Ascending aorta (tissue), 2 donors: ENCODE measurements at regions of chr19 and their contacts with region 1.

Region 1: GRCh38 chr19:7515645-7516151 is at the start of gene ZNF358:
- DNase-seq: peak in 1 of 2 donors; percentile 88
- H3K4me3 ChIP-seq: peak within 1 kb of the TSS; percentile 70 to 97
- H3K27ac ChIP-seq: peak within 1 kb of the TSS; percentile 90 to 96
- H3K4me1 ChIP-seq: peaks cover 6 to 23% of the 10 kb centered on the region in 2 donors
- H3K27me3 ChIP-seq: no peaks in the 10 kb centered on the region
- CTCF ChIP-seq: no peak
- total RNA-seq, gene ZNF358: 163 TPM

Region 2: GRCh38 chr19:7230826-7231225 is 284.9 kb before region 1 on chr19:
- intact Hi-C with region 1: loop called (anchors 10 kb)
- DNase-seq: peak in 1 of 2 donors; percentile 81
- H3K4me3 ChIP-seq: peak overlapping the region in 1 of 2 donors; percentile 28
- H3K27ac ChIP-seq: peak overlapping the region in 1 of 2 donors; percentile 53
- H3K4me1 ChIP-seq: peaks cover 3 to 22% of the 10 kb centered on the region in 2 donors
- H3K27me3 ChIP-seq: no peaks in the 10 kb centered on the region
- CTCF ChIP-seq: no peak

Region 3: DNA sequence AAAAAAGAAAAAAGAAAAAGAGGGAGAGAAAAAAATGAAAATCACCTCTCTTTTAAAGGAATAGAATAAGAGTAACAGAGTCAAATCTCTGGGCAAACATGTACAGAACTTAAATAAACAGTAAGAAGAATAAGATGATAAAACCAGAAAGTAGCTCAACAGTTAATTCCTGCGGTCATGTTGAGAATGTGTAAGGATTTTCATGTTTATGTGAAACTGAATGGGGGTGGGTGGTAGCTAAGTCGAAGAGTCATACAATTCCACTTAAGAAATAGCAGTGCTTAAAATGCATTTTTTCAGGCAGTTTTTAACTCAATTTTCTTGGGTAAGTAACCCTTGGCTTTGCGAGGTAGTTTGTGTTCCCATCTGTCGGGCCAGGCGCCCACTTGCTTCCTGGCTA is 87.8 kb before region 1 on chr19:
- intact Hi-C with region 1: no loop called
- DNase-seq: no peak
- H3K4me3 ChIP-seq: no peak overlapping the region
- H3K27ac ChIP-seq: no peak overlapping the region
- H3K4me1 ChIP-seq: no peaks in the 10 kb centered on the region
- H3K27me3 ChIP-seq: no peaks in the 10 kb centered on the region
- CTCF ChIP-seq: no peak

Region 4: DNA sequence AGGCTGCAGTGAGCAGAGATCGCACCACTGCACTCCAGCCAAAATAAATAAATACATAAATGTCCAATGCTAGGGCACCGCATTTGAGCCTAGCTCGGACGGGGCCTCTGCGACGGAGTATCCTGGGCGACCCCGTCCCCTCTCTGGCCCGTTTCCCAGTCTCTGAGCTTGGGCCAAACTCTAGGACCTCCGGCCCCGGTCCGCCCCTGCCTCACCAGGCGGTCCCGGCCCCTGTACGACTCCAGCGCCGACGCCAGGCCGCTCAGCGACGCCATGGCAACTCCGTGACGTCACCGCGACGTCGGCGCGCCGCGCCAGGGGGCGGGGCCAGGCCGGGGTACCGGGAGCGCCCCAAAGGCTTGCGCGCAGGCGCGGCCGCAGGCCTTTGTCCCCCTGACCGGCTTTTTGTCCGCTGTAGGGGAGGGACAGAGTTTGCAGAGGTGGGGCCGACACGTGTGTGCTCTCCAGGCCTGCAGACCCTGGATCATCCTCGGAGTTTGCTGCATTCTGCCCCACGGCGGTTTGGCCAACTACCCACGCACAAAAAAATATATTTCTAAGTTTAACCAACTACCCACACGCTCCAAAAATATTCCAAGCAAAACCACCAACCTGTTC is 26.9 kb before region 1 on chr19 and contains the start of gene PEX11G:
- intact Hi-C with region 1: loop called (anchors 1 kb)
- DNase-seq: peak; percentile 37 to 93
- H3K4me3 ChIP-seq: peak within 1 kb of the TSS; percentile 73 to 84
- H3K27ac ChIP-seq: peak within 1 kb of the TSS; percentile 70 to 84
- H3K4me1 ChIP-seq: peaks cover 0 to 4% of the 10 kb centered on the region in 2 donors
- H3K27me3 ChIP-seq: no peaks in the 10 kb centered on the region
- CTCF ChIP-seq: no peak
- total RNA-seq, gene PEX11G: not detected

Region 5: GRCh38 chr19:7550987-7551761 is 35.5 kb after region 1 on chr19:
- intact Hi-C with region 1: no loop called
- DNase-seq: peak in 1 of 2 donors; percentile 77
- H3K4me3 ChIP-seq: peak overlapping the region in 1 of 2 donors; percentile 14
- H3K27ac ChIP-seq: no peak overlapping the region
- H3K4me1 ChIP-seq: no peaks in the 10 kb centered on the region
- H3K27me3 ChIP-seq: no peaks in the 10 kb centered on the region
- CTCF ChIP-seq: no peak